Panc1 (cell line): ENCODE measurements at regions of chr9 and their contacts with region 1.

Region 1: DNA sequence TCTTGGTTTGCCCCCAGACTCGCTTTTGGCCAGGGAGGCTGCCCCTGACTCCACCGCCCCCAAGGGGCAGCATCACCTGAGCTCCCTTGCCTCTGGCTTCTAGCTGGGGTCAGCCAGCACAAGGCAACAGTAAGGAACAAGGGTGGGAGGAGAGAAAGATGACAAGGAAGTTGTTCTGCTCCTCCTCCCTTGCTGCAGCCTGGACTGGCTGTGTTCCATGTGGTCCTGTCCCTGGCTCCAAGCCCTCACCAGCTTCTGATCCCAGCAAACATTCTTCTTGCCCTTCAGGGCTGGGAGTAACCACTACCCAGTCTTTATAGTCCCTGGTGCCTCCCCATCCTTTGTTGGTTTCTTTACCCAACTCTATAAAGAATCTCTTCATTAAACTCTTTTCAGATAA is 100.3 kb upstream of the SPIN1 start:
- DNase-seq: no peak
- ATAC-seq: no peak
- H3K4me3 ChIP-seq: no peak overlapping the region
- H3K27ac ChIP-seq: no peak overlapping the region
- H3K4me1 ChIP-seq: no peaks in the 10 kb centered on the region
- H3K27me3 ChIP-seq: no peaks in the 10 kb centered on the region
- CTCF ChIP-seq: no peak

Region 2: GRCh38 chr9:88236531-88237478 is 51.2 kb before region 1 on chr9:
- CTCF ChIA-PET with region 1: no interaction called
- POLR2A ChIA-PET with region 1: no interaction called
- in situ Hi-C with region 1: no loop called
- intact Hi-C with region 1: no loop called
- DNase-seq: no peak
- ATAC-seq: no peak
- H3K4me3 ChIP-seq: no peak overlapping the region
- H3K27ac ChIP-seq: no peak overlapping the region; the same call in 1 of the 2 replicates
- H3K4me1 ChIP-seq: no peaks in the 10 kb centered on the region
- H3K27me3 ChIP-seq: no peaks in the 10 kb centered on the region
- CTCF ChIP-seq: no peak

Region 3: DNA sequence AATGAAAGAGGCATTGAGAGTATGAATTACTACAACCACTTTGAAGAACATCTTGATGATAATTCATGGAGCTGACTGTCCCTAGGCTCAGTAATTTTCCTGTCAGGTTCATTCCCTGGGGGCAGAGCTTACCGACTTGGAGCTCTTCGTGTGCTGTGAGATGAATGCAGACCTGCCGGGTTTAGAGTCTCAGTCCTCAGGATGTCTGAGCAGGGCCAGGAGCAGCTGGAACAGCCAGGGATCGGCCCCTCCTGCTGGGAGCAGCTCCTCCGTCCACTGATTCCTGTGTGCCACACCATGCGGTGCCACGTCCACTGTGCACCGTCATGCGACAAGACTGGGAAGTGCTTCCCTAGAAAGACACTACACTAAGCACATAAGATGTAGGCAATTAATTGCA is 38.1 kb after region 1 on chr9:
- CTCF ChIA-PET with region 1: no interaction called
- POLR2A ChIA-PET with region 1: interaction called, 12 read pairs
- in situ Hi-C with region 1: no loop called
- intact Hi-C with region 1: no loop called
- DNase-seq: no peak
- ATAC-seq: no peak
- H3K4me3 ChIP-seq: no peak overlapping the region
- H3K27ac ChIP-seq: no peak overlapping the region
- H3K4me1 ChIP-seq: no peaks in the 10 kb centered on the region
- H3K27me3 ChIP-seq: no peaks in the 10 kb centered on the region
- CTCF ChIP-seq: no peak